Ascending aorta (tissue), 2 donors: ENCODE measurements at regions of chr7 and their contacts with region 1.

Region 1: DNA sequence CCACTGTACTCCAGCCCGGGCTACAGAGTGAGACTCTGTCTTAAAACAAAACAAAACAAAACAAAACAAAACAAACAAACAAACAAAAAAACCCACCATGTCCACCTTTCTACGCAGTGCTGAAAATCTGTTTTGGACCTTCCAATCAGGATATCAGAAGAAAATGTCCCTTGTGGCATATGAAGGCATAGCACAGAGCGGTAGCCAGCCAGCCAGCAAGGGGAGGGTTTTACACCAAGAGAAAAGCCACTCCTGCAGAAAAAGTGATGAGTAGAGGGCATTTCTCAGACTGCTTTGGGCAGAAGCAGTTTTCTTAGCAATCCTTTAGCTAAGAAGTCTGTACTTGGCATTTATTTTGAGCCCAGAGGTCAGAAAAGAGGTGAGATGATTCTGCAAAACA is 612.2 kb downstream of the TYW1 start:
- DNase-seq: no peak
- H3K4me3 ChIP-seq: no peak overlapping the region
- H3K27ac ChIP-seq: no peak overlapping the region
- H3K4me1 ChIP-seq: no peaks in the 10 kb centered on the region
- H3K27me3 ChIP-seq: no peaks in the 10 kb centered on the region
- CTCF ChIP-seq: no peak

Region 2: GRCh38 chr7:67547176-67547907 is 61.5 kb before region 1 on chr7:
- intact Hi-C with region 1: no loop called
- DNase-seq: no peak
- H3K4me3 ChIP-seq: no peak overlapping the region
- H3K27ac ChIP-seq: no peak overlapping the region
- H3K4me1 ChIP-seq: no peaks in the 10 kb centered on the region
- H3K27me3 ChIP-seq: no peaks in the 10 kb centered on the region
- CTCF ChIP-seq: no peak

Region 3: DNA sequence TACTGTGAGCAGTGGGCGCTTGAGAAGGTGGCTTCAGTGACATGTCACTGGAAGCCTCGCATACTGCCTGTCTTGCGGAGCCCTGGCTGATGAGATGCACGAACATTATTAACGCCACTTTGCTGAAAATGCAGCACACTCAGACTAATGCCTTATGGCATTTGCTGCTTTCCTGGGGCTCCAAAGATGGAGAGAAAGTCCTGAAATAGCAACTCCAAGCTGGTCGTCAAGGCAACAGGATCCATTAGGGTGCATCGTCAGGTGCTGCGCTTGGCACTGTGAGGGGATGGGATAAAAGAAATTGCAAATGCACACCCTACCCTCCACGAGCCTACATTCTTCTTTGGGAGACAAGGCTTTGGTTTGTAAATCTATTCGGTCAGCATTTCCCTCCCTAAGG is 19.6 kb before region 1 on chr7:
- intact Hi-C with region 1: no loop called
- DNase-seq: no peak
- H3K4me3 ChIP-seq: no peak overlapping the region
- H3K27ac ChIP-seq: no peak overlapping the region
- H3K4me1 ChIP-seq: no peaks in the 10 kb centered on the region
- H3K27me3 ChIP-seq: no peaks in the 10 kb centered on the region
- CTCF ChIP-seq: no peak

Region 4: GRCh38 chr7:67666369-67666768 is 57.6 kb after region 1 on chr7:
- intact Hi-C with region 1: loop called (anchors 10 kb)
- DNase-seq: no peak
- H3K4me3 ChIP-seq: no peak overlapping the region
- H3K27ac ChIP-seq: no peak overlapping the region
- H3K4me1 ChIP-seq: no peaks in the 10 kb centered on the region
- H3K27me3 ChIP-seq: no peaks in the 10 kb centered on the region
- CTCF ChIP-seq: no peak